Ascending aorta (tissue), 2 donors: ENCODE measurements at regions of chr3 and their contacts with region 1.

Region 1: GRCh38 chr3:43855674-43856299 is 165.0 kb downstream of the ABHD5 start:
- DNase-seq: peak in 1 of 2 donors; percentile 83
- H3K4me3 ChIP-seq: no peak overlapping the region
- H3K27ac ChIP-seq: no peak overlapping the region
- H3K4me1 ChIP-seq: peaks cover 0 to 6% of the 10 kb centered on the region in 2 donors
- H3K27me3 ChIP-seq: no peaks in the 10 kb centered on the region
- CTCF ChIP-seq: peak; percentile 26 to 67 (median 61)

Region 2: DNA sequence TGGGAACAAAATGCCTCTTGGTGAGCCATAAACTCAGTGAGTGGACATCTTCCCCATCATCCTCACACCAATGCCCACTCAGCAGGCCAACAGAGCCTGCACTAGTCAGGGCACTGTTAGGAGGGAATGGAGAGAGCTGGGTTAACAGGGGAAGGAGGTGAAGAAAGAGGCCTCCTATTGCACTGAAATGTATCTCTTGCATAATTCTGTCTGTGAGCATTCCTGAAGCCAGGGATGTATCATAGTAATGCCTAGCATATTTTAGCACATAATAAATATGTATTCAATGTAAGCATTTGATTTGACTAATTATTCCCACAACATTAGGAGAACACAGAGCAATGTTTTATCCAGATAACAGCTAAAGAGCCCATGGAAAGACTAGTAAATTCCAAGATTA is 315.2 kb before region 1 on chr3:
- intact Hi-C with region 1: loop called (anchors 10 kb)
- DNase-seq: no peak
- H3K4me3 ChIP-seq: no peak overlapping the region
- H3K27ac ChIP-seq: no peak overlapping the region
- H3K4me1 ChIP-seq: no peaks in the 10 kb centered on the region
- H3K27me3 ChIP-seq: no peaks in the 10 kb centered on the region
- CTCF ChIP-seq: no peak

Region 3: DNA sequence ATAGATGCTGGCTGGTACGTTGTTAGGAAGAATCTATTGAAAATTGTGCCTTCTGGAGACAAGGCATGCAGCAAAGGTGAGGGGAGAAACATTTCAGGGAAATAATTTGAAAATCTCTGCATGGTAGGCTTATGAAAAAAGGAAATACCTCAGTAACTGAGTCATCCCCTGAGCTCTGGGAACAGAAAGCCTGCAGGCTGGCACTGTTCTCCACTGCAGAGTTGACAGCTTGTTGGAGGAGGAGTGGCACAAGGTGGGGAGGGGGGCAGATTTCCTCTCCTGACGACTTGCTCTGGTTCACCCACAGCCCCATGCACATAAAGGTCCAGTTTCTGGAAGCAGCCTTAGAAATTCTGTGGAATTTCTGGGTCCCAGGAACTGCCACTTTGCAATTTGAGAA is 14.3 kb after region 1 on chr3:
- intact Hi-C with region 1: loop called (anchors 2 kb)
- DNase-seq: peak in 1 of 2 donors; percentile 78
- H3K4me3 ChIP-seq: no peak overlapping the region
- H3K27ac ChIP-seq: peak overlapping the region; percentile 79 to 85
- H3K4me1 ChIP-seq: peaks cover 11 to 37% of the 10 kb centered on the region in 2 donors
- H3K27me3 ChIP-seq: no peaks in the 10 kb centered on the region
- CTCF ChIP-seq: no peak

Region 4: GRCh38 chr3:43998836-43999727 is 143.3 kb after region 1 on chr3:
- intact Hi-C with region 1: loop called (anchors 5 kb)
- DNase-seq: no peak
- H3K4me3 ChIP-seq: peak overlapping the region; percentile 45 to 75
- H3K27ac ChIP-seq: no peak overlapping the region
- H3K4me1 ChIP-seq: peaks cover 15 to 39% of the 10 kb centered on the region in 2 donors
- H3K27me3 ChIP-seq: peaks cover 24% of the 10 kb centered on the region
- CTCF ChIP-seq: no peak

Region 5: GRCh38 chr3:44077246-44077645 is 221.5 kb after region 1 on chr3:
- intact Hi-C with region 1: no loop called
- DNase-seq: no peak
- H3K4me3 ChIP-seq: no peak overlapping the region
- H3K27ac ChIP-seq: no peak overlapping the region
- H3K4me1 ChIP-seq: no peaks in the 10 kb centered on the region
- H3K27me3 ChIP-seq: no peaks in the 10 kb centered on the region
- CTCF ChIP-seq: no peak

Region 6: GRCh38 chr3:44198284-44199269 is 342.8 kb after region 1 on chr3:
- intact Hi-C with region 1: loop called (anchors 5 kb)
- DNase-seq: peak in 1 of 2 donors; percentile 82
- H3K4me3 ChIP-seq: no peak overlapping the region
- H3K27ac ChIP-seq: no peak overlapping the region
- H3K4me1 ChIP-seq: no peaks in the 10 kb centered on the region
- H3K27me3 ChIP-seq: no peaks in the 10 kb centered on the region
- CTCF ChIP-seq: peak; percentile 67 to 79 (median 79)

Region 7: GRCh38 chr3:45236964-45237363 is 1381.2 kb after region 1 on chr3:
- intact Hi-C with region 1: no loop called
- DNase-seq: no peak
- H3K4me3 ChIP-seq: no peak overlapping the region
- H3K27ac ChIP-seq: no peak overlapping the region
- H3K4me1 ChIP-seq: no peaks in the 10 kb centered on the region
- H3K27me3 ChIP-seq: no peaks in the 10 kb centered on the region
- CTCF ChIP-seq: no peak